ENCODE measurements at regions of chr18 and their contacts with region 1.

Region 1: DNA sequence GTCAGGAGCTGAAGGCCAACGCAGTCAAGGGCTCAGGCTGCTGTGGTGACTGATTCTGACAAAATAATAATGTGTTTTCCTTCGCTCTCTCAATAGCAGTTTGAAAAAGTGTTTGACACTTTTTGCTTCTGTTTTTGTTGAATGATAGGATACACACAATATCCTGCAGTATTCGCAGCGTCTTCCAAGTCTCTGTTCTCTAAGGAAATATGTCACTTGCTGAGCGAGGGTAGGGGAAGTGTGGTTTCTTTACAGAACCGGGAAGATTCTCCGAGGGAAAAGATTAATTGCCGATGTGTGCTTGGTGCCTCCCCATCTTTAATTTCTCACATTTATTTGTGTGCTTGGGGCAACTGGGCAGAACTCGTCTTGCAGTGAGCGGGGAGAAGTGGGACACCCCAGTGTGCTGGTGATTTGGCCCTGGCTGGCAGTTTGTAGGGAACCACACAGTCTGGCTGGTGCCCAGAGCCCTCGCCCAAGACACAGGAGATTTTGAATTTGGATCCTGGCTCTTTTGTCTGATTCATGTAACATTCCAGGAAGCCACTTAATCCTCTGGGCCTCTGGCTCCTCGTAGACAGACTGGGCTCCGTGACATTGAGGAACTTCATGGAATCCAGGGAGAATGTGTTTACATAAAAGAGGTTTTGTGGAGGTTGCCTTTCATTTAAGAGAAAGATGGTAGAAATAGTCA is 169.4 kb downstream of the LDLRAD4 start:
- DNase-seq: no peak
- H3K4me3 ChIP-seq: no peak overlapping the region
- H3K27ac ChIP-seq: peak overlapping the region; percentile 8 to 60 (median 41)
- H3K4me1 ChIP-seq: peaks cover 36 to 46% (median 42%) of the 10 kb centered on the region in 4 donors
- H3K27me3 ChIP-seq: no peaks in the 10 kb centered on the region
- CTCF ChIP-seq: no peak
- EP300 ChIP-seq: no peak
- POLR2A ChIP-seq: no peak

Region 2: GRCh38 chr18:13284330-13285027 is 103.5 kb before region 1 on chr18:
- intact Hi-C with region 1: no loop called
- DNase-seq: no peak
- H3K4me3 ChIP-seq: peak overlapping the region; percentile 13 to 31 (median 27)
- H3K27ac ChIP-seq: peak overlapping the region; percentile 13 to 50 (median 45)
- H3K4me1 ChIP-seq: peaks cover 15 to 58% (median 42%) of the 10 kb centered on the region in 4 donors
- H3K27me3 ChIP-seq: no peaks in the 10 kb centered on the region
- CTCF ChIP-seq: no peak
- EP300 ChIP-seq: no peak
- POLR2A ChIP-seq: no peak

Region 3: DNA sequence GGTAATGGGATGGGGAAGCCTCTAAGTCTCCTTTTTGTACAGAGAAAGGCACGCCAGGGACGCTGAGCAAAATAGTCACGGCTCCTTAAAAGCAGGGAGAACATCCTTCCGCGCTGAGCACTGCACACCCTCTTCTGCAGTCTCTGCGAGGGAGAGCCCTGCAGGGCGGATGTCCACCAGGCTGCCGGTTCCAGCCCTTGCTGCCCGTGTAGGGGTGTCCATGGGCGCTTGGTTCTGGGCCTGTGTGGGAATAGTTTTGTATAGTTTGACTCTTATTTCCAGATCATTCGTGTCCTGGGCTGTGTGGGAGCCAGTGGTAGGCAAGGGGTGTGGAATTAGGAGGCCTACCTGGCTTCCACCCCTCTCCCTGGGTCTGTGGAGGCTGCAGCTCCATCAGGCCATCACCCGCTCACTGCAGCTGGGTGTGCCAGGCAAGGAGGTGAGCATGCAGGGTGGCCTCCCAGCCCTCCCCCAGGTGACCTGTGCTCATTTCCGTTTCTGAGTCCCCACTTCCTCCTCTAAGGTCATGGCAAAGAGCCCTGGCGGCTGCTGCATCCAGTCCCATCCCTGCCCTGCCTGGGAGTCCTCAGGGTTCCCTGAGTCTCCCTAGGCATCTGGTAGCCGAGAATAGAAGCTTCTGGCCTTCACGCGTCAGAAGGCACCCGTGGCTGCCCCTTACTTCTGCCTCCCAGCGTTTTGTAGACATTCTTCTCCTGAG is 33.1 kb after region 1 on chr18:
- intact Hi-C with region 1: loop called (anchors 5 kb)
- DNase-seq: no peak
- H3K4me3 ChIP-seq: no peak overlapping the region
- H3K27ac ChIP-seq: no peak overlapping the region
- H3K4me1 ChIP-seq: peaks cover 20 to 41% (median 30%) of the 10 kb centered on the region in 4 donors
- H3K27me3 ChIP-seq: no peaks in the 10 kb centered on the region
- CTCF ChIP-seq: no peak
- EP300 ChIP-seq: no peak
- POLR2A ChIP-seq: no peak